Gastrocnemius medialis (tissue), 4 donors: ENCODE measurements at regions of chr19 and their contacts with region 1.

Region 1: DNA sequence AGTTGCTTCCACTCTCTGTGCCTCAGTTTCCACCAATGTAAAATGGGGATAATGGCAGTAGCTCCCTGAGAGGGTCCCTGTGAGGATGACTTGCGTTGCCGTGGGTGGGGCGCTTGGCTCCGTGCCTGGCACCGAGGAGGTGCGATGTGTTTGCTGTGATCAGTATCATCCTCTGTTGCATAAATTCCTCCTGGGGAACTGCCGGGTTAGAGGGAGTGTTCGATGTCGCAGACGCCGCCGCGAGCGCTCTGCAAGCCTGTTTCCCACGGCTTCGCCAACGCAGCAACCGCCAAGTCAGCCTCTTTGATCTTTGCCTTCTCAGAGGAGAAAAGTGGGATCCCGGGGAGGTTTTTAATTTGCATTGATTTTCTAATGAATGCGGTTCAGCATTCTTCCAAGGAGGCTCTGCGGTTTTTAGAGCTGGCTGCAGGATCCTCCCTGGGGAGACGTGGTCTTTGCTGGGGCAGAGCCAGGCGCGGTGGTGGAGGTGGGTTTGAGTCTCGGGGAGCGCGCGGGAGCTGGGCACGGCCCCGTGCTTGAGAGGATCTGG is 7.6 kb downstream of the GPR32 start:
- DNase-seq: no peak
- ATAC-seq: no peak
- H3K4me3 ChIP-seq: no peak overlapping the region
- H3K27ac ChIP-seq: no peak overlapping the region
- H3K4me1 ChIP-seq: no peaks in the 10 kb centered on the region
- H3K27me3 ChIP-seq: peaks cover 42 to 55% (median 54%) of the 10 kb centered on the region in 3 donors
- CTCF ChIP-seq: no peak
- POLR2A ChIP-seq: no peak

Region 2: GRCh38 chr19:50368649-50369570 is 408.9 kb before region 1 on chr19:
- in situ Hi-C with region 1: loop called in 2 of 4 experiments (anchors 10 kb)
- intact Hi-C with region 1: no loop called
- DNase-seq: peak; percentile 70 to 83
- ATAC-seq: peak; percentile 94 to 97
- H3K4me3 ChIP-seq: peak overlapping the region; percentile 64 to 74 (median 68)
- H3K27ac ChIP-seq: peak overlapping the region; percentile 49 to 75 (median 64)
- H3K4me1 ChIP-seq: peaks cover 3 to 7% of the 10 kb centered on the region in 2 donors
- H3K27me3 ChIP-seq: no peaks in the 10 kb centered on the region
- CTCF ChIP-seq: peak; percentile 71 to 93 (median 89)
- POLR2A ChIP-seq: no peak

Region 3: DNA sequence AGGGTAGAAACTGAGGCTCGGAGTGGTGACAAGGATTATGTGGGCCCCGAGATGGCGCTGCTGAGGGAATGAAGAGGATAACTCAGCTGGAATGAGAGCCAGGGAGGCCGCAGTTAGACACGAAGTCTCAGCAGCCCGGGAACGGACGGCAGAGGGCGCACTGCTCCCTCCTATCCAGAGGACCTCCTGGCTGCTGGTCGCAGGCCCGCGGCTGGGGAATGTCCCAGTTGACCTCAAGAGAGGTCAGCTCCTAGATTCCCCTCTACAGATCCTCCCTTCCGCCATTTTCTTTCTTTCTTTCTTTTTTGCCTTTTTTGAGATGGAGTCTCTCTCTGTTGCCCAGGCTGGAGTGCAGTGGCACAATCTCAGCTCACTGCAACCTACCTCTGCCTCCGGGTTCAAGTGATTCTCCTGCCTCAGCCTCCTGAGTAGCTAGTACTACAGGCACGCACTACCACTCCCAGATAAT is 240.0 kb before region 1 on chr19:
- in situ Hi-C with region 1: loop called in 3 of 4 experiments (anchors 25 kb)
- intact Hi-C with region 1: loop called (anchors 2 kb)
- DNase-seq: peak in 1 of 2 donors; percentile 47
- ATAC-seq: peak in 1 of 2 donors; percentile 47
- H3K4me3 ChIP-seq: no peak overlapping the region
- H3K27ac ChIP-seq: no peak overlapping the region
- H3K4me1 ChIP-seq: no peaks in the 10 kb centered on the region
- H3K27me3 ChIP-seq: peaks cover 0 to 4% (median under 1%) of the 10 kb centered on the region in 3 donors
- CTCF ChIP-seq: peak in 4 of 5 experiments; percentile 33 to 64 (median 56)
- POLR2A ChIP-seq: no peak

Region 4: DNA sequence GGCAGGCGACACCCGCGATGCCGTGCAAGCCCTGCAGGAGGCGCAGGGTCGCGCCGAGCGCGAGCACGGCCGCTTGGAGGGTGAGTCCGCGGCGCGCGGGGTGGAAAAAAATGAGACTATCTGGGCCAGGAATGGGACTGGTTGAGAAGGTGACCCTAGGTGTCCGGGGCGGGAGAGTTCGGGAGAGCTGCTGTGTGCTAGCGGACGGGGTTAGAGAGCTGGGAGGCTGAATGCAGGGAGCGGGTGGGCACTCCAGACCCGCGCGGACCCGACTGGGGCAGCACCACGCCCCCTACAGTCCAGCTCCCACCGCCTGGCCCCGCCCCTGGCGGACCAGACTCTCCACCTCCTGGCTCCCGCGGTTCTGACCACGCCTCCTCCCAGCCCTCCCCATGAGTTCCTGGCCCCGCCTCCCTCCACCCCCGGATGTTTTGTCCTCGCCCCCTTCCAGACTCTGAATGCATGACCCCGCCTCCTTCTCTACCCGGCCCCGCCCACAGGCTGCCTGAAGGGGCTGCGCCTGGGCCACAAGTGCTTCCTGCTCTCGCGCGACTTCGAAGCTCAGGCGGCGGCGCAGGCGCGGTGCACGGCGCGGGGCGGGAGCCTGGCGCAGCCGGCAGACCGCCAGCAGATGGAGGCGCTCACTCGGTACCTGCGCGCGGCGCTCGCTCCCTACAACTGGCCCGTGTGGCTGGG is 53.2 kb before region 1 on chr19:
- in situ Hi-C with region 1: no loop called
- intact Hi-C with region 1: loop called (anchors 2 kb)
- DNase-seq: peak; percentile 85 to 92
- ATAC-seq: peak; percentile 86 to 94
- H3K4me3 ChIP-seq: peak overlapping the region; percentile 51 to 58 (median 56)
- H3K27ac ChIP-seq: peak overlapping the region; percentile 16 to 49 (median 28)
- H3K4me1 ChIP-seq: peaks cover 0 to 5% of the 10 kb centered on the region in 2 donors
- H3K27me3 ChIP-seq: peaks cover 19 to 52% (median 45%) of the 10 kb centered on the region in 3 donors
- CTCF ChIP-seq: peak; percentile 20 to 67 (median 44)
- POLR2A ChIP-seq: peak; percentile 14 to 32

Region 5: DNA sequence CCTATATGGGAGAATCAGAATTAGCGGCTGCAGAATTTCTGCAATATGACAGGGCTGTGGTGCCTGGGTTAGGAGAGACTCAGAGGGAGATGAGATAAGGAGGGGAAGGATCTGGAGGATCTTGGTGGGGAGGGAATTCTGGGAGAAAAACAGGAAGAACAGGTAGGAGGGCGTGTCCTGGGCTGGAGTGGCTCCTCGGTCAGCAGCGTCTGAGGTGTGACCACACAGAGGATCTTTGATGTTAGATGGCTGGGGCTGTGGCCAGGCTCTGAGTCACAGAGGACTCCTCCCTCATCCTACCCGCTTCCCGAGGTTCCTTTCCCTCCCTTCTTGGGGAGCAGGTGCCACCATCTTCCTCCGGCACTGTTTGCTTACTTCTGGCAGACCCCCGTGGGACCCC is 197.9 kb after region 1 on chr19:
- in situ Hi-C with region 1: no loop called
- intact Hi-C with region 1: no loop called
- DNase-seq: no peak
- ATAC-seq: no peak
- H3K4me3 ChIP-seq: no peak overlapping the region
- H3K27ac ChIP-seq: no peak overlapping the region
- H3K4me1 ChIP-seq: no peaks in the 10 kb centered on the region
- H3K27me3 ChIP-seq: no peaks in the 10 kb centered on the region
- CTCF ChIP-seq: no peak
- POLR2A ChIP-seq: no peak